CD4-positive, alpha-beta T cell (primary cell): ENCODE measurements at regions of chr13 and their contacts with region 1.

Region 1: DNA sequence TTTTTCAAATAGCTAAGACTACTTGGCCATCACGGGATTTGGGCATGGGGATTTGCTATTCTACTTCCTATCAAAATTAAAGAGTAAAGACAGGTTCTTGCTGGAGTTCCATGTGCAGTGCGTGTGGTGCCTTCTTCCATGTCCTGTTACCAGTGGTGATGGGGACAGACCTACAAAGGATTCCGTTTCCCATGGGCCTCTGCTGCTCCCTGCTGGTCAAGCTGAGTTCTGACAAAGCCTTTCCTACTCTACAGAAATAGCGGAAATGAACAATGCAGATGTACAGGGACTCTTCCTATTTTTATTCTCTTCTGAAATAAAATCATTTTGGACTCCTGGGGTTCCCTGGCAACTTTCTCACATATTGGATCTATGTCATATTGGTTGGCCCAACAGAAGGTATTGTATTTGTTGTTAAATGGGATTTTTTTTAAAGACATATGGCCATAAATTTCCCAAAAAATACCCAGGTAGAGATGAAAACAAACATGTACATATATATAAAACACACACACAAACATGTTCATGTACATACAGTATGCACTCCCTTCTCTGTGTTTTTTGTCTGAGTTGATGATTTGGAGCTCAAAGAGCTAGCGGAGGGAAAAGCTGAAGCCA is 90.5 kb upstream of the SLC15A1 start:
- DNase-seq: peak; percentile 22 to 74 (median 53)
- ATAC-seq: peak; percentile 86
- H3K4me3 ChIP-seq: no peak overlapping the region
- H3K4me3 Mint-ChIP-seq: no peak overlapping the region
- H3K27ac ChIP-seq: no peak overlapping the region
- H3K27ac Mint-ChIP-seq: no peak overlapping the region
- H3K4me1 ChIP-seq: no peaks in the 10 kb centered on the region
- H3K4me1 Mint-ChIP-seq: peaks cover 11% of the 10 kb centered on the region
- H3K27me3 ChIP-seq: no peaks in the 10 kb centered on the region
- H3K27me3 Mint-ChIP-seq: no peaks in the 10 kb centered on the region
- CTCF ChIP-seq: peak; percentile 78

Region 2: DNA sequence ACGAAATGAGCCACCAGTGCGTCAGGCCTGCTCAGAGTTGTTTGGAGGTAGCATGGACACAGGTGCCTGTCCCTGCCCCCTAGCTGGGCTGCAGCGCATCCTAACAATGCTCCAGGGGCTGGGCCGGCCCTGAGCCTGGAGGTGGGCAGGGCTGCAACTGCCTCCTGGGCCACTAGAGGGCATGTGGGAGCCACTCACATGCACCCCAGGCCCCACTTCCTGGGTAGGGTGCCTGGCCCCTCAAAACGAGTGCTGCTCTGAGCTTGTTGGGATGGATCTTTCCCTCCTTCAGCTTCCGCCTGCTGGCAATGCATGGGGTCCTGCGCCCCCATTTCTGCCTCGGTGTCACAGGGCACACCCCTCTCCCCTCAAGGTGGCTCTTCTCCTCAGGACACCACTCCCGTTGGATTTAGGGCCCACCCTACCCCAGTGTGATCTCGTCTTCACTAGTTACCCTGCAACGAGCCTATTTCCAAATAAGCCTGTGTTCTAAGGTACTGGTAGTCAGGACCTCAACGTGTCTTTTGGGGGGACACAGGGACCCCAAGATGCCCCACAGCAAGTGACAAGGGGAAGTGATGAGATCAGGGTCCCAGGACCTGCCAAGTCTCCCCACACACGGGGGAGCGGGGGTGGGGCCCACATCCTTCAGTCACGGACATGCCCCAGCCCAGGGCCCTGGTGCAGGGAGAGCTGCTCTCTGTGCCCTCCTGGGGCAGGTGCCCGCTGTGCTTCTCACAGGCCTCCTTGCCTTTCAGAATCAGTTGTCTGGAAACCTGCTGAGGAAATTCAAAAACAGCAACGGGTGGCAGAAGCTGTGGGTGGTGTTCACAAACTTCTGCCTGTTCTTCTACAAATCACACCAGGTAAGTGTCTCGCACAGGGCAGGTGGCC is 397.4 kb before region 1 on chr13:
- CTCF ChIA-PET with region 1: interaction called, 3 read pairs
- POLR2A ChIA-PET with region 1: no interaction called
- intact Hi-C with region 1: loop called in 1 of 2 experiments (anchors 10 kb)
- DNase-seq: peak; percentile 62 to 88 (median 74)
- ATAC-seq: peak; percentile 99
- H3K4me3 ChIP-seq: no peak overlapping the region
- H3K4me3 Mint-ChIP-seq: peak overlapping the region; percentile 63
- H3K27ac ChIP-seq: peak overlapping the region; percentile 52 to 55
- H3K27ac Mint-ChIP-seq: peak overlapping the region; percentile 90
- H3K4me1 ChIP-seq: peaks cover 16% of the 10 kb centered on the region
- H3K4me1 Mint-ChIP-seq: peaks cover 22% of the 10 kb centered on the region
- H3K27me3 ChIP-seq: no peaks in the 10 kb centered on the region
- H3K27me3 Mint-ChIP-seq: no peaks in the 10 kb centered on the region
- CTCF ChIP-seq: peak; percentile 97

Region 3: GRCh38 chr13:98938801-98939200 is 95.8 kb after region 1 on chr13:
- CTCF ChIA-PET with region 1: no interaction called
- POLR2A ChIA-PET with region 1: no interaction called
- intact Hi-C with region 1: no loop called
- DNase-seq: no peak
- ATAC-seq: no peak
- H3K4me3 ChIP-seq: no peak overlapping the region
- H3K4me3 Mint-ChIP-seq: no peak overlapping the region
- H3K27ac ChIP-seq: no peak overlapping the region
- H3K27ac Mint-ChIP-seq: peak overlapping the region; percentile 4
- H3K4me1 ChIP-seq: peaks cover 7% of the 10 kb centered on the region
- H3K4me1 Mint-ChIP-seq: peaks cover 47% of the 10 kb centered on the region
- H3K27me3 ChIP-seq: no peaks in the 10 kb centered on the region
- H3K27me3 Mint-ChIP-seq: no peaks in the 10 kb centered on the region
- CTCF ChIP-seq: no peak

Region 4: DNA sequence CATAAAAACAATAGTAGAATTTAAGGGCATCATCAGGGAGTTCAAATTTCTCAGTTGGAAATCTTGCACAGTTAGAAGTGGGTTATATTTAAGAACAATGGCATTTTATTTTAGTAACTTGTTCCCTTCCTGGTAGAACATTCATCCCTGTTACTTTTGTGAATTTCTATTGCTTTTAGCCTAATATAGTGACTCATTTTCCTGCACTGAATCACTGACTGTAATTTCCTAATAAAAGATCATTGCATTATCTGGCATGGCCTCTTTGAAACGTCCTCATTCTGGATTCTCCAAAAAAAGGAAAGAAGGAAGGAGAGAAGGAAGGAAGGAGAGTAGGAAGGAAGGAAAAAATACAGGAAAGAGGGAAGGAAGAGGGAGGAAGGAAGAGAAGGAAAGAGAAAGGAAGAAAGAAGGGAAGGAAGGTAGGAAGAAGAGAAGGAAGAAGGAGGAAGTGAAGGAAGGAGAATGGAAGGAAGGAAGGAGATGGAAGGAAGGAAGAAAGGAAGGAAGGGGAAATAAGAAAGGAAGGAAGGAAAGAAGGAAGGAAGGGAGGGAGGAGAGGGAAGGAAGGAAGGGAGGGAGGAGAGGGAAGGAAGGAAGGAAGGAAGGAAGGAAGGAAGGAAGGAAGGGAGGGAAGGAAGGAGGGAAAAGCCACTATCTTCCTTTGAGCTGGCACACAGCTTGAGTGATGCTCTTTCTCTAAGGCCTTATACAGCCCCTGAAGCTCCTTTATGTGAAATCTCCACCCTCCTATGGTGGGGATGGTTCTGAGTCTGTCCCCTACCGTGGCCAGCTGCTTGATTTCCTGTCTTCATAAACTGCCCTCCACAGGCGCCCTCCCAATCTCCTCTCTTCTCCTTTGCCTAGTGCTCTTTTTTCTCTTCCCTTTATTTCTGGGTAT is 628.5 kb after region 1 on chr13:
- CTCF ChIA-PET with region 1: no interaction called
- POLR2A ChIA-PET with region 1: no interaction called
- intact Hi-C with region 1: no loop called
- DNase-seq: no peak
- ATAC-seq: no peak
- H3K4me3 ChIP-seq: no peak overlapping the region
- H3K4me3 Mint-ChIP-seq: no peak overlapping the region
- H3K27ac ChIP-seq: no peak overlapping the region
- H3K27ac Mint-ChIP-seq: no peak overlapping the region
- H3K4me1 ChIP-seq: no peaks in the 10 kb centered on the region
- H3K4me1 Mint-ChIP-seq: peaks cover 3% of the 10 kb centered on the region
- H3K27me3 ChIP-seq: no peaks in the 10 kb centered on the region
- H3K27me3 Mint-ChIP-seq: peaks cover 14% of the 10 kb centered on the region
- CTCF ChIP-seq: no peak

Region 5: GRCh38 chr13:100175078-100175802 is 1332.3 kb after region 1 on chr13:
- CTCF ChIA-PET with region 1: no interaction called
- POLR2A ChIA-PET with region 1: no interaction called
- intact Hi-C with region 1: no loop called
- DNase-seq: no peak
- ATAC-seq: no peak
- H3K4me3 ChIP-seq: no peak overlapping the region
- H3K4me3 Mint-ChIP-seq: no peak overlapping the region
- H3K27ac ChIP-seq: no peak overlapping the region
- H3K27ac Mint-ChIP-seq: no peak overlapping the region
- H3K4me1 ChIP-seq: no peaks in the 10 kb centered on the region
- H3K4me1 Mint-ChIP-seq: no peaks in the 10 kb centered on the region
- H3K27me3 ChIP-seq: no peaks in the 10 kb centered on the region
- H3K27me3 Mint-ChIP-seq: no peaks in the 10 kb centered on the region
- CTCF ChIP-seq: no peak